Heart left ventricle (tissue), 16 donors: ENCODE measurements at regions of chr6 and their contacts with region 1.

Region 1: DNA sequence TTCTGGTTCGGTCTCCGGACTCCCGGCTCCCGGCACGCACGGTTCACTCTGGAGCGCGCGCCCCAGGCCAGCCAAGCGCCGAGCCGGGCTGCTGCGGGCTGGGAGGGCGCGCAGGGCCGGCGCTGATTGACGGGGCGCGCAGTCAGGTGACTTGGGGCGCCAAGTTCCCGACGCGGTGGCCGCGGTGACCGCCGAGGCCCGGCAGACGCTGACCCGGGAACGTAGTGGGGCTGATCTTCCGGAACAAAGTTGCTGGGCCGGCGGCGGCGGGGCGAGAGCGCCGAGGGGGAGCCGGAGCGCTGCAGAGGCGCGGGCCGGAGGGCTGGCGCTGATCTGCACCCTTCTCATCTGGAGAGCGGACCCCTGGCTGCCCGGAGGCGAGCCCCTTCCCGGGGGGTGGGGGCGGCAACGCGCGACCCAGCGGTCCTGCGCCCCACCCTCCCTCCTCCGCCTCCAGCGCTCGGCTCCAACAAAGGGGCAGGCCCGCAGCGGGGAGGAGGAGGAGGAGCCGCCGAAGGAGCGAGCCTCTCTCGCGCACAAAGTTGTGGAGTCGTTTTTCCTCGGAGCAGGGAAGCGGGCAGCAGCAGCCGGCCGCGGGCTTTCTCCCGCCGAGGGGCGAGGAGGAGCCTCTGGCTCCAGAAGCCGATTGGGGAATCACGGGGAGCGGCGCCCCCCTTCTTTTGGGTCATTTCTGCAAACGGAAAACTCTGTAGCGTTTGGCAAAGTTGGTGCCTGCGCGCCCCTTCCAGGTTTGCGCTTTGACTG is at the start of gene UTRN:
- DNase-seq: peak; percentile 87 to 92 (median 88)
- ATAC-seq: peak; percentile 71 to 86 (median 81)
- H3K4me3 ChIP-seq: peak within 1 kb of the TSS; percentile 67 to 92 (median 86)
- H3K27ac ChIP-seq: peak within 1 kb of the TSS; percentile 95 to 99 (median 98)
- H3K4me1 ChIP-seq: peaks cover 0 to 31% (median 11%) of the 10 kb centered on the region in 12 donors
- H3K27me3 ChIP-seq: no peaks in the 10 kb centered on the region
- CTCF ChIP-seq: peak in 1 of 12 donors; percentile 4
- POLR2A ChIP-seq: peak in 1 of 2 donors; percentile 60
- total RNA-seq, gene UTRN: 69.3 to 129 (median 86.0) TPM

Region 2: DNA sequence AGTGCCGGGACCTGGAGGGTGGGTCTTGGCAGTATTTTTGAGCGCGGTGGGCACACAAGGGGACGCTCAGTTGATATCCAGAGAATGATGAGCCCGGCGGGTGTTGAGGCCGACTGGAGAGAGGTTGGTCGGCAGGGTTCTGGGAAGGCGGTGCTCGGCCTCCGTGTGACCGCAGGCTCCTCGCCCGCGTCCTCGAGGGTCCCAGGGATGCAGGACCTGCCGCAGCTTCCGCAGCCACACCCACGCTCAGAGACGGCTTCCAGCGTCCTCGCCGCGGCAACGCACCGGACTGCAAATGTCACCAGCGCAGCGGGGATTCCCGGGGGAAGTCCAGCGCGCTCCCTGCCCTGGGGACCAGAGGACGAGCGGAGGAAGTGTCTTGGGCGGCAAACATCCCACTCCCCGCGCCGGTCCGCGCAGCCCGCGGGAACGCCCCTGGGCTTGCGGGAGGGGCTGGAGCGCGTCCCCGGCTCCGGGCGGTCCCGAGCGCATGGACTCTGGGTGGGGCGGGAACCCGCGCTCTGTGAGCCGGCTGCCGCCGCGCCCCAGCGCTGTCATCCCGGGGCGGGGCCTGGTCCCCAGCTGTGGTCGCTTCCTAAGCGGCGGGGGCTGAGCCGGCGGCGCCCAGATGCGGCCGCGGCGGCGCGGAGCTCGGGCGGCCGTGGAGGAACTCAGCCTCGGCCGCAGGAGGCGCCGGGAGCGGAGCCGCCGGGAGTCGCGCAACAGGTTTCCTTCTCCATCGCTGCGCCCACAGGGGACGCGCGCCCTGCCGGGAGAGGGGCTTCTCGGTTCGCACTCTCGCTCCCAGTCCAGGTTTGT is 134.9 kb before region 1 on chr6 and contains the start of gene STX11:
- intact Hi-C with region 1: loop called in 5 of 10 experiments (anchors 5 to 10 kb)
- DNase-seq: peak; percentile 82 to 90 (median 85)
- ATAC-seq: peak; percentile 80 to 97 (median 94)
- H3K4me3 ChIP-seq: peak within 1 kb of the TSS; percentile 64 to 95 (median 78)
- H3K27ac ChIP-seq: peak within 1 kb of the TSS; percentile 10 to 97 (median 77)
- H3K4me1 ChIP-seq: peaks cover 0 to 51% (median 10%) of the 10 kb centered on the region in 12 donors
- H3K27me3 ChIP-seq: no peaks in the 10 kb centered on the region
- CTCF ChIP-seq: peak in 2 of 12 donors; percentile 21 to 46
- POLR2A ChIP-seq: peak in 1 of 2 donors; percentile 84
- total RNA-seq, gene STX11: 5.4 to 21.0 (median 9.0) TPM

Region 3: GRCh38 chr6:144265390-144265789 is 19.6 kb before region 1 on chr6:
- intact Hi-C with region 1: loop called in 1 of 10 experiments (anchors 2 kb)
- DNase-seq: no peak
- ATAC-seq: peak in 3 of 4 donors; percentile 17 to 59 (median 47)
- H3K4me3 ChIP-seq: peak overlapping the region in 1 of 12 donors; percentile 13
- H3K27ac ChIP-seq: peak overlapping the region; percentile 45 to 83 (median 68)
- H3K4me1 ChIP-seq: peaks cover 9 to 32% (median 26%) of the 10 kb centered on the region in 12 donors
- H3K27me3 ChIP-seq: no peaks in the 10 kb centered on the region
- CTCF ChIP-seq: no peak
- POLR2A ChIP-seq: no peak

Region 4: DNA sequence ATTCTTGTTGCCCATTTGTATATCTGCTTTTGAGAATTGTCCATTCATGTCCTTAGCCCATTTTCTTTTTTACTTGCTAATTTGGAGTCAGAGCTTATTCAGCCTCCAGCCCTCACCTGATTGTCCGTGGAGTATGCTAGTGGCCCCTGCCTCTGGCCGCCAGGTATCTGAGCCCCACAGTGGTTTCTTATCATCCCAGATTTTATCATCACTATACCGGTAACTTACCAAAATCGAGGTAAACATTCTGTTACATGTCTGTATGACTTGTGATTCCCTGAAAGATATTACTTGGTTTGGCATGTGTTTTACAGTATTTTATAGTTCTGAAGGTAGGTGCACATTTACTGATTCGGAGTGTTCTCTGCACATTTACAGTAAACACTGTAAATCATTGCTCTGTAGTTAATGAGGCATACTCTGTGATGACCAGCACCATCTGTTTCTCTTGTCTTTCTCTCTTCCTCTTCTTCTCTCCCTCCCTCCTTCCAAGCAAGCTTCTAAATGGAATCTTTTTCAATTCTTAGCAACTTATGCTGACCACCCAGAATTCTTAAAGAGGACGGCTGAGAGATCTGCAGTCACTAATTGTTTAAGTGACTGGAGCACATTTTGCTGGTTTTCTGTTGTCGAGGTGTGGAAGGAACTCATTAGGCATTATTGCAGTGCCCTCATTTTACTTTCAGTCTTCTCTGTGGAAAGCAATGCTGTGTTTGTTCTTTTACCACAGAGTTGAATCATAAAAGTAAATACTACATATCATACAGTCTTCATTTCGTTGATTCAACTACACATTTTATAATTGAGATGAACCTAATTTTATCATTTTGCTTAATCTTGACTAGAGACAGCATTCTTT is 126.6 kb after region 1 on chr6:
- intact Hi-C with region 1: loop called in 3 of 10 experiments (anchors 10 kb)
- DNase-seq: no peak
- ATAC-seq: no peak
- H3K4me3 ChIP-seq: no peak overlapping the region
- H3K27ac ChIP-seq: no peak overlapping the region
- H3K4me1 ChIP-seq: peaks cover 0 to 57% (median 41%) of the 10 kb centered on the region in 12 donors
- H3K27me3 ChIP-seq: no peaks in the 10 kb centered on the region
- CTCF ChIP-seq: no peak
- POLR2A ChIP-seq: no peak

Region 5: GRCh38 chr6:144447472-144447871 is 162.5 kb after region 1 on chr6:
- intact Hi-C with region 1: loop called in 1 of 10 experiments (anchors 10 kb)
- DNase-seq: no peak
- ATAC-seq: no peak
- H3K4me3 ChIP-seq: no peak overlapping the region
- H3K27ac ChIP-seq: no peak overlapping the region
- H3K4me1 ChIP-seq: peaks cover 0 to 10% (median 5%) of the 10 kb centered on the region in 12 donors
- H3K27me3 ChIP-seq: no peaks in the 10 kb centered on the region
- CTCF ChIP-seq: no peak
- POLR2A ChIP-seq: no peak